A673 (cell line): ENCODE measurements at regions of chr13 and their contacts with region 1.

Region 1: GRCh38 chr13:29907670-29908069 is 57.3 kb upstream of the UBL3 start:
- DNase-seq: no peak
- H3K4me3 ChIP-seq: no peak overlapping the region
- H3K27ac ChIP-seq: no peak overlapping the region
- H3K4me1 ChIP-seq: peaks cover 5% of the 10 kb centered on the region
- H3K27me3 ChIP-seq: no peaks in the 10 kb centered on the region
- CTCF ChIP-seq: no peak

Region 2: GRCh38 chr13:29850224-29850898 is 57.3 kb before region 1 on chr13 and contains the start of gene UBL3:
- CTCF ChIA-PET with region 1: interaction called, 11 read pairs
- POLR2A ChIA-PET with region 1: no interaction called
- intact Hi-C with region 1: no loop called
- DNase-seq: peak; percentile 98
- H3K4me3 ChIP-seq: peak within 1 kb of the TSS; percentile 74
- H3K27ac ChIP-seq: peak within 1 kb of the TSS; percentile 90
- H3K4me1 ChIP-seq: peaks cover 14% of the 10 kb centered on the region
- H3K27me3 ChIP-seq: no peaks in the 10 kb centered on the region
- CTCF ChIP-seq: no peak
- total RNA-seq, gene UBL3: 12.0 and 13.0 TPM in 2 replicates